Activated B cell treated with CpG ODN at 0.5 μM for 24 hours (primary cell): ENCODE measurements at regions of chr5 and their contacts with region 1.

Region 1: GRCh38 chr5:41903892-41904799 is at the start of gene RIMOC1:
- DNase-seq: peak; percentile 97
- ATAC-seq: peak; percentile 92
- H3K4me3 Mint-ChIP-seq: peak within 1 kb of the TSS; percentile 99
- H3K27ac Mint-ChIP-seq: peak within 1 kb of the TSS; percentile 99
- H3K4me1 Mint-ChIP-seq: peaks cover 34% of the 10 kb centered on the region
- H3K27me3 Mint-ChIP-seq: peaks cover 4% of the 10 kb centered on the region
- CTCF ChIP-seq: no peak
- total RNA-seq, gene RIMOC1: 26.0 and 30.2 TPM in 2 replicates

Region 2: DNA sequence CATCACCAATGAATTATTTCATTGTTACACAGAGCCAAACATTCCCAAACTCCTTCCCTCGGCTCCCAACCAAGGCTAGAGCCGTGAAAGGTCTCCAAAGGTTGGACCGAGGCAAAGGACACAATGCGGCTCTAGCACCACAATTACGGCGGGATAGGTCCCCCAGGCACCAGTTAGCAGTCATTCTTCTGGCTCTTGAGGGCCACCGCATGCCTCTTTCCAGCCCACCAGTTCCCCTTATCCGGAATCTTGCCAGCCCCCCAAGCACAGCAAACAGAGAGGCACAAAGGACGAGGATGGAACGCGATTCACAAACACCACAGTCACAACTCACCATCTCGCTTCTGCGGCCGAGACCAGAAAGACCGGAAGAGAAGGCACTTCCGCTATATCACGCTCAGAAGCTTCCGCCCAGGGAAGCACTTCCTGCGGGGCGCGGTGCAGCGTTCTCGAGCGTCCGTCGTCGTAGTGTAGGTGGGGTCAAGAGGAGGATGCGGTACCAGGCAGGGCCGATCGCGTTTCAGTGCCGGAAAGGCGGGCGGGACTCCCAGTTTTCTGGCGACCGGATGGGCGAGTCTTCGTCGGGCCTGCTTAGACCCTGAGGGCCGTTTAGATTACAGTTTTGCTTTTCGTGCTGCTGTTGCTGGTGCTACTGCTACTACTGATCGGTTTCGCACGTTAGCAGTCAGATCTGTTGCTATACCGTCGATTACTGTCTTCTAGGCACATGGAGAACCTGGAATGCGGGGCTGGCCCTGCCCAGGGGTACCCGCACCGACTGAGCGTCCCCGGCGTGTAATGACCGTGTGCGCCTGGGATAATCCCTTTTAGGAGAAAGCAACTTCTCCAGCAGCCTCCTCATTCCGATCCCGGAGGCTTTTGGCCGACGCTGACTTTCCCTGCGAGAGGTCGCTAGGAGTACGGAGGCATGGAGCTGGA is 1069.0 kb before region 1 on chr5 and contains the start of gene RPL37:
- CTCF ChIA-PET with region 1: no interaction called
- POLR2A ChIA-PET with region 1: interaction called, 5 read pairs
- intact Hi-C with region 1: loop called (anchors 1 kb)
- DNase-seq: peak; percentile 80
- ATAC-seq: peak; percentile 98
- H3K4me3 Mint-ChIP-seq: peak within 1 kb of the TSS; percentile 100
- H3K27ac Mint-ChIP-seq: peak within 1 kb of the TSS; percentile 99
- H3K4me1 Mint-ChIP-seq: peaks cover 49% of the 10 kb centered on the region
- H3K27me3 Mint-ChIP-seq: no peaks in the 10 kb centered on the region
- CTCF ChIP-seq: no peak
- total RNA-seq, gene RPL37: 2,223 and 2,547 TPM in 2 replicates

Region 3: DNA sequence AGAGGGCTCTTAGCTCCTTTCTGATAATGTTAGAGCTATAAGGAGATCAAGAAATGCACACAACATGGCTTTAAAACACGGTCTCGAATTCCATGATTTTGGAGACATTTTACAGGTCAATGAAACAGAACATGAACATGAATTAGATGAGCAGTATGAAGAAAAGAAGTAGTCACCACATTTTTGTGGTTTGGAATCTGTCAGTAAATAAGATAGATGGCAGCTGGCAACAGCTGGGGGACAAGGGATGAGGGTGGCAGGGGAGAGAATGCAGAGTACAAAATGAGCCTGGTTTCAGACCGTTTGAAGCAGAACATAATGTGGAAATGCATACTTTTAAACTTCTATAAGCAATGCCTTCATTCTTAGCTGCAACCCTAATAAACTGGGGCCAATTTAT is 141.1 kb before region 1 on chr5:
- CTCF ChIA-PET with region 1: no interaction called
- POLR2A ChIA-PET with region 1: no interaction called
- intact Hi-C with region 1: no loop called
- DNase-seq: no peak
- ATAC-seq: no peak
- H3K4me3 Mint-ChIP-seq: no peak overlapping the region
- H3K27ac Mint-ChIP-seq: no peak overlapping the region
- H3K4me1 Mint-ChIP-seq: no peaks in the 10 kb centered on the region
- H3K27me3 Mint-ChIP-seq: no peaks in the 10 kb centered on the region
- CTCF ChIP-seq: no peak

Region 4: GRCh38 chr5:41924872-41925554 is 20.9 kb after region 1 on chr5 and contains the start of gene FBXO4:
- CTCF ChIA-PET with region 1: interaction called, 7 read pairs
- POLR2A ChIA-PET with region 1: interaction called, 74 read pairs
- intact Hi-C with region 1: loop called (anchors 1 kb)
- DNase-seq: peak; percentile 82
- ATAC-seq: peak; percentile 95
- H3K4me3 Mint-ChIP-seq: peak within 1 kb of the TSS; percentile 93
- H3K27ac Mint-ChIP-seq: peak within 1 kb of the TSS; percentile 97
- H3K4me1 Mint-ChIP-seq: peaks cover 24% of the 10 kb centered on the region
- H3K27me3 Mint-ChIP-seq: no peaks in the 10 kb centered on the region
- CTCF ChIP-seq: no peak
- total RNA-seq, gene FBXO4: 14.8 and 15.9 TPM in 2 replicates

Region 5: GRCh38 chr5:43066799-43067741 is 1162.9 kb after region 1 on chr5:
- CTCF ChIA-PET with region 1: no interaction called
- POLR2A ChIA-PET with region 1: interaction called, 6 read pairs
- intact Hi-C with region 1: loop called (anchors 10 kb)
- DNase-seq: peak; percentile 83
- ATAC-seq: peak; percentile 55
- H3K4me3 Mint-ChIP-seq: peak overlapping the region; percentile 95
- H3K27ac Mint-ChIP-seq: peak overlapping the region; percentile 99
- H3K4me1 Mint-ChIP-seq: peaks cover 40% of the 10 kb centered on the region
- H3K27me3 Mint-ChIP-seq: no peaks in the 10 kb centered on the region
- CTCF ChIP-seq: no peak

Region 6: DNA sequence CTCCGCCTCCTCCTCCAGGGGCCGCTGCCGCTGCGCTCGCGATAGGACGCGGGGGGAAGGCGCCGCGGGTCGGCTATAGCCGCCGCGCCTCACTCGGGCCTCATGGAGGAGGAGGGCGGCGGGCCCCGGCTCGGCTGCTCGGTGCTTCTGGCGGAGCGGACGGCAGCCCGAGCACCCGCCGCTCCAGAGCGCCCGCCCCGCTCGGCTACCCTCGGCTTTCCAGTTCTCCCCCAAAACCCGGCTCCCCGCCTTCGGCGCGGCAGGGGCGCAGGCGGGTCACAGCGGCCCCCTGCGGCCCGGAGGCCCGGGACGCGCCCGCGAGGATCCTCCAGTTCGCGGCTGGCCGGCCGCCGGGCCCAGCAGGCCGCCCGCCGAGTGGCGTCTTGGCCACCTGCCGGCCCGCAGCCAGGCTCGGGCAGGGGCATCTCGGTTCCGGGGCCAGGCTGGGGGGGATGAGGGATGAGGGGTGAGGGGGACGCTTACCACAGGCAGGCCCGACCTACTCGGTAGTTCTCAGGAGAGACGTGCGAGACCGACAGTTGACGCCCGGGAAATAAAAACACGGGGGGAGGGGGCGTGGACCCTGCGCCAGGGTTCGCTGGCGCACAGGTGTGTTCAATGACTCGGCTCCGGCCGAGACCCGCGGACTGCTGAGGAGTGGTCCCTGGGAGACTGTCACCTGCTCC is 1652.9 kb after region 1 on chr5 and contains the start of gene PAIP1:
- CTCF ChIA-PET with region 1: no interaction called
- POLR2A ChIA-PET with region 1: no interaction called
- intact Hi-C with region 1: loop called (anchors 1 kb)
- DNase-seq: peak; percentile 90
- ATAC-seq: peak; percentile 93
- H3K4me3 Mint-ChIP-seq: peak within 1 kb of the TSS; percentile 89
- H3K27ac Mint-ChIP-seq: peak within 1 kb of the TSS; percentile 94
- H3K4me1 Mint-ChIP-seq: peaks cover 21% of the 10 kb centered on the region
- H3K27me3 Mint-ChIP-seq: no peaks in the 10 kb centered on the region
- CTCF ChIP-seq: peak; percentile 41
- total RNA-seq, gene PAIP1: 35.1 and 38.3 TPM in 2 replicates